OCI-LY7 (cell line): ENCODE measurements at regions of chr11 and their contacts with region 1.

Region 1: DNA sequence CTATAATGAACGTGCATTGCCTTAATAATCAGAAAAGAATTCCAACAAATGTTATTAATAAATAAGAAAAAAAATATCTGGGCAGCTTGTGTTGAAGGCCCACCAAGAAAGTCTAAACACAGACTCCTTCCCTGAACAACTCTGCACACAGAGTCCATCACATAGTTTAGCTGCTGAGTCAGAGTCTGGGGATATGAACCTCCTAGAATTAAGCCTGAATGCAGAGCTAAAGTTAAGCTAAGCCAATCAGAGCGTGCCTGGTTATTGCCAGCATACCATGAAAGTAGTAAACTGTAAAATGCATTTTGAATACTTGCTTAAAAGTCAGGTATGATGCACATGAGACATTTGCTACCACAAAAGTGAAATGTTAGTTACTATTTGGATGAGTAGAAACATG is 25.6 kb upstream of the TENM4 start:
- DNase-seq: no peak
- H3K4me3 ChIP-seq: no peak overlapping the region
- H3K27ac ChIP-seq: no peak overlapping the region
- H3K4me1 ChIP-seq: no peaks in the 10 kb centered on the region
- CTCF ChIP-seq: no peak

Region 2: GRCh38 chr11:77512092-77512491 is 1954.3 kb before region 1 on chr11:
- CTCF ChIA-PET with region 1: interaction called, 11 read pairs
- POLR2A ChIA-PET with region 1: no interaction called
- intact Hi-C with region 1: no loop called
- DNase-seq: no peak
- H3K4me3 ChIP-seq: no peak overlapping the region
- H3K27ac ChIP-seq: no peak overlapping the region
- H3K4me1 ChIP-seq: no peaks in the 10 kb centered on the region
- CTCF ChIP-seq: no peak